ENCODE measurements at regions of chr15 and their contacts with region 1.

Region 1: DNA sequence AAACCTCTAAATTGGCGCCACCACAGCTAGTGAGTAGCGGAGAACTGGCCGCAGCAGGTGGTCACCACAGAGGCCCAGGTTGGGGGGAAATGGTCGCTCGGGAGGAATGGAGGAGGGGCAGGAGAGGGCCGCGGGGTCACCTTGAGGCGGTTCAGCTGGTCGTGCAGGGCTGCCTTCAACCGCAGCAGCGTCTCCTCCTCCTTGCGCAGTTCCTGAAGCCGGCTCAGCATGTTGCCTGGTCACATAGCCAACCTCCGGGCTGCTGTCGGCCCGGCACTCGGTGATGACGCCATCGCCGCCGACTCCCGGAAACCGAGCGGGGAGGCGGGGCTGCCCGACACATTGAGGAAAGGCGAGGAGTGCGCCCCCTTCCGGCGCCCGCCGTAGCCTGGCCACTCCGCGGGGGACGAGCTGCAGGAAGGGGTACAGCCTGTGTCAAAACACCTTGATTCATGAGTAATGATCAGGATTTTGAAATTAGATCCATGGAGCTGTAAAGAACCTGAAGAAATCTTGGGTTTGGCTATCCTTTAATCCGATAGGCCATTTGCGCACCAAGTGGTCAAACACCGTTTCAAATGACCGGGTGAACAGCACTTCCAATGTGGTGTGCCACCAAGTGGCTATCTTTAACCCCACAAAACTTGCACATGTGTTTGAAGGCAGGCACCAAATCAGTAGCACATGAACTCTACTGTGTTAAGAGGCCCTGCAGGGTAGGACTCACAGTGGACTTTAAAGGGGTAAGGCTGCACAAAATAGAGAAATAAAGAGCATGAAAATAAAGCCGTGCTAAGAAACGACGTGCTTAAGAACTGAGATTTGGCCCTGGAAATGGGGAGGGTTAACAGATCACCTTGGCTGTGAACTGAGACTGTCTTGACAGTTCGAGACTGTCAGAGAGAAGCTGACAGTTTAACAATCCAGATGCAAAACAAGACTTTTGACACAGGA is at the start of gene SNAPC5:
- DNase-seq: peak; percentile 98
- H3K4me3 ChIP-seq: peak within 1 kb of the TSS; percentile 60 to 85 (median 83)
- H3K27ac ChIP-seq: peak within 1 kb of the TSS; percentile 83 to 94 (median 91)
- H3K4me1 ChIP-seq: peaks cover 10 to 30% (median 17%) of the 10 kb centered on the region in 4 donors
- H3K27me3 ChIP-seq: no peaks in the 10 kb centered on the region
- CTCF ChIP-seq: peak; percentile 97 to 99 (median 98)
- EP300 ChIP-seq: no peak
- POLR2A ChIP-seq: peak; percentile 81
- total RNA-seq, gene SNAPC5: 2.6 to 64.0 (median 32.1) TPM

Region 2: DNA sequence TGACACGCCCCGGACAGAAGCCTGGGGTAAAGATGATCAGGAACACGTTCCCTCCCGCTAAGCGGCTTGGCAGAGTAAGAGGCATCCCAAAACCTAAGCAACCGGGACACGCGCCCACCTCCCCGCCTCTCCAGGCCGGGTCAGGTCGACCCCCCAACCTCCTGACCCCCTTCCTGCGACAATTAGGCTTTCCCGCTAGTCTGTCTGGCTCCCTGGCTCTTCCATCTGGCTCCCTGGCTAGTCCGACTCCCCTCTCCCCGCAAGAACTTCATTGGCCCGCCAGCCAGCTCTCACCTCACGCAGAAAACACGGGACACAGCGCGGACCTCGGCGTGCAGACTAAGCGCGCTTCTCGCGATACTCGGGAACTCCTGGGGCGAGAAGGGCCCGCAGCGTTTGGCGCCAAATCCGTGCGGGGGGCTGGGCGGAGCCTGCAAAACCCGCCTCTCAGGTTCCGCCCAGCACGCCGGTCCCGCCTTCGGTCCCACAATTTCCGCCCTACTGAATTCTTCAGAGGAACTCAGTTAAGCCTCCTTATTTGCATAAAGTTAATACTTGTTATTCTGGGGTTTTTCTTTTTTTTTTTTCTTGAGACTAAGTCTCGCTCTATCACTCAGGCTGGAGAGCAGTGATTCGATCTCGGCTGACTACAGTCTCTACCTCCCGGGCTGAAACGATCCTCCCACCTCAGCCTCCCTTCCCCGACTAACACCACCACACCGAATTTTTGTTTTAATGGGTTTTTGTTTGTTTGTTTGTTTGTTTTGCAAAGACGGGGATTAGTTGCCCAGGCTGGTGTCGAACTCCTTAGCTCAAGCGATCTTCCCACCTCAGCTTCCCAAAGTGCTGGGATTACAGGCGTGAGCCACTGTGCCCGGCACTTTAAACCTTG is 141.2 kb before region 1 on chr15 and contains the start of gene TIPIN:
- in situ Hi-C with region 1: loop called in 1 of 4 experiments (anchors 10 kb)
- intact Hi-C with region 1: no loop called
- DNase-seq: peak; percentile 98
- H3K4me3 ChIP-seq: peak within 1 kb of the TSS; percentile 43 to 73 (median 56)
- H3K27ac ChIP-seq: peak within 1 kb of the TSS; percentile 64 to 88 (median 78)
- H3K4me1 ChIP-seq: peaks cover 0 to 19% (median 8%) of the 10 kb centered on the region in 4 donors
- H3K27me3 ChIP-seq: no peaks in the 10 kb centered on the region
- CTCF ChIP-seq: no peak
- EP300 ChIP-seq: no peak
- POLR2A ChIP-seq: peak; percentile 53
- total RNA-seq, gene TIPIN: 2.2 to 4.0 (median 2.5) TPM in 3 of 4 donors, not detected in the other

Measured in transverse colon (tissue), 4 donors.